Mammary epithelial cell (primary cell): ENCODE measurements at regions of chr12 and their contacts with region 1.

Region 1: DNA sequence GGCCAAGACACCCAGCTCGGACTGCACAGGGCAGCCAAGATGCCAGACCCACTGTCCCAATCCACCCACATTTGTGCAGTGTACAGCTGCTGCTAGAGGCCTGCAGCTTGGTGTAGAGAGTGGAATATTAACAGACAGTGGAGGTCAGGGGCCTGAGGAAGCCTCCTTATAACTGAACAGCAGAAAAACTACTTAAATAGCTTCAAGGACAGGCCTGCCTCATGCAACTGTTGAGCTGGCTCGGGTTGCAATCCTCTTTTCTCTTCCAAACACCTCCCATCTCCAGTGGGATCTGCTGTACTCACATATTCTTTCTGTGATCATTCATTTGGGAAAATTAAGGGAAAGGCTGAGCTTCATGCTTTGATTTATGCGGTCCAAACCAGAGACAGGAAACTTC is 1043.2 kb upstream of the TMEM132C start:
- DNase-seq: no peak
- H3K4me3 ChIP-seq: no peak overlapping the region
- H3K27ac ChIP-seq: no peak overlapping the region
- H3K4me1 ChIP-seq: peaks cover 2% of the 10 kb centered on the region
- H3K27me3 ChIP-seq: no peaks in the 10 kb centered on the region
- CTCF ChIP-seq: no peak

Region 2: GRCh38 chr12:127145929-127146789 is 77.6 kb before region 1 on chr12:
- CTCF ChIA-PET with region 1: no interaction called
- dilution Hi-C with region 1: loop called (anchors 5 kb)
- in situ Hi-C with region 1: no loop called
- intact Hi-C with region 1: no loop called
- DNase-seq: peak; percentile 46
- H3K4me3 ChIP-seq: peak overlapping the region; percentile 6 to 73 (median 55)
- H3K27ac ChIP-seq: peak overlapping the region; percentile 35
- H3K4me1 ChIP-seq: peaks cover 12% of the 10 kb centered on the region
- H3K27me3 ChIP-seq: no peaks in the 10 kb centered on the region
- CTCF ChIP-seq: peak in 1 of 2 donors; percentile 25

Region 3: GRCh38 chr12:127411166-127411915 is 187.6 kb after region 1 on chr12:
- CTCF ChIA-PET with region 1: no interaction called
- dilution Hi-C with region 1: no loop called
- in situ Hi-C with region 1: no loop called
- intact Hi-C with region 1: no loop called
- DNase-seq: peak; percentile 16
- H3K4me3 ChIP-seq: no peak overlapping the region
- H3K27ac ChIP-seq: no peak overlapping the region
- H3K4me1 ChIP-seq: no peaks in the 10 kb centered on the region
- H3K27me3 ChIP-seq: no peaks in the 10 kb centered on the region
- CTCF ChIP-seq: no peak

Region 4: GRCh38 chr12:127485528-127485927 is 261.8 kb after region 1 on chr12:
- CTCF ChIA-PET with region 1: no interaction called
- dilution Hi-C with region 1: no loop called
- in situ Hi-C with region 1: no loop called
- intact Hi-C with region 1: no loop called
- DNase-seq: peak; percentile 71
- H3K4me3 ChIP-seq: no peak overlapping the region
- H3K27ac ChIP-seq: no peak overlapping the region
- H3K4me1 ChIP-seq: no peaks in the 10 kb centered on the region
- H3K27me3 ChIP-seq: no peaks in the 10 kb centered on the region
- CTCF ChIP-seq: peak in 1 of 2 donors; percentile 32